Activated CD4-positive, alpha-beta memory T cell treated with anti-CD3 and anti-CD28 coated beads, Interleukin-2, amount 10 ng/mL, durations not matched to agents 7 days and 5 days (primary cell): ENCODE measurements at regions of chr1 and their contacts with region 1.

Region 1: GRCh38 chr1:161117759-161118581 is at the starts of genes NIT1 and PFDN2:
- DNase-seq: peak; percentile 89
- H3K4me3 Mint-ChIP-seq: peak within 1 kb of the TSS; percentile 93
- H3K27ac Mint-ChIP-seq: peak within 1 kb of the TSS; percentile 95
- H3K4me1 Mint-ChIP-seq: peaks cover 66% of the 10 kb centered on the region
- H3K27me3 Mint-ChIP-seq: no peaks in the 10 kb centered on the region
- total RNA-seq, gene NIT1: 50.8 to 51.5 TPM
- total RNA-seq, gene PFDN2: 76.6 to 78.8 TPM

Region 2: DNA sequence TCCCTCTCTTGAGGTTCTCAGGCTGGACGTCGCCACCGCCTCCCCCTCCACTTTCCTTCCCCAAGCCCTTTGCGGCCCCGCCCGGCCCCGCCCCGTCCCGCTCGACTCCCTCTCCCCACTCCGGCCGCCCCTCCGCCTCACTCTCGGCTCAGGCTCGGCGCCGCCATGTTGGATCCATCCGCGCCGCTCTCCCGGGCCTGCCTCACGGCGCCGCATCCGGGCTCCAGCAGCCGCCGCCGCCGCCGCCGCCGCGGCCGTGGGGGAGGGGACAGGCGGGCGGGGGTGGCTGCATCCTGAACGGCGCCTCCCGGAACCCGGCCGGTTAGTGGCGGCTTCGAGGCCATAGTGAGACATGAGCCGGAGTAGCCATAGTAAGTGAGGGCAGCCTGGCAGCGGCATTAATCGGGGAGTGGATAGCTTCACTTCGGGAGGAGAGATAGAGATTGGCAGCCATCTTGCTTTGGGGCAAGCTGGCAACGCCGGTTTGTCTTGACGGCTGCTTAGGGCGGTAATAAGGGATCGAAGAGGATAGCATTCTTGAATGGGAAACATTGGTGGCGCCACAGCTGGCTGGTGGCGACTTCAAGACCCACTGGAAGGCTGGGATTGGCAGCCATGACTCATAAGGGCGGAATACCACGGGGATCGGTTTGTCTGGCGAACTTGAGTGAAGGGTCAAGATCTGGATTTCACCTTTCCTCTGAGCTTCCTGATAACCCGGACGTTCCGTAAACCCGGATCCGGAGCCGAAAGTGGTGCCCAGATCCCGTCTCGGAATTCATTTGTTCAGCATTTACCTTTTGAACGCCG is 14.6 kb after region 1 on chr1 and contains the start of gene DEDD:
- CTCF ChIA-PET with region 1: interaction called, 21 read pairs
- POLR2A ChIA-PET with region 1: interaction called, 12 read pairs
- DNase-seq: peak; percentile 94
- H3K4me3 Mint-ChIP-seq: no peak within 1 kb of the TSS
- H3K27ac Mint-ChIP-seq: no peak within 1 kb of the TSS
- H3K4me1 Mint-ChIP-seq: peaks cover 43% of the 10 kb centered on the region
- H3K27me3 Mint-ChIP-seq: no peaks in the 10 kb centered on the region
- total RNA-seq, gene DEDD: 38.2 to 40.0 TPM